MCF 10A (cell line): ENCODE measurements at regions of chr5 and their contacts with region 1.

Region 1: DNA sequence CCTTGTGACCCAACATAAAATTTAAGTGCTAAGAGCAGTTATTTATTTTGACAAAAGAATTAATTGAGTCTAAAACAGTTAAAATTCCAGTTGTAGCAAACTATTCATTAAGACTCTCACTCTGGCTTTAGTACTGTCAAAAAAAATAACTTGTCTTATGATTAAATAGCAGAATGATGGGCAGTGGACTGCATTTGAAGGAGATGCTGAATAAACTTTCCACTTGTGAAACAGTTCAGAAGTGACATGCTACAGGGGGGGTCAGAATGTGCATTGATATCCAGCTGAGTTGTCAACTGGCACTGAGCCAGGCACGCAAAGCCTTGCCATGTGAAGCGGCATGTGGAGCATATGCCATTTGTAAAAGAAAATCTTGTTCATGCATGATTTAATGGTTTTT is 76.0 kb downstream of the FCHO2 start:
- DNase-seq: peak; percentile 78
- H3K4me3 Mint-ChIP-seq: no peak overlapping the region
- H3K27ac Mint-ChIP-seq: peak overlapping the region; percentile 51
- H3K4me1 Mint-ChIP-seq: peaks cover 16% of the 10 kb centered on the region
- H3K27me3 Mint-ChIP-seq: no peaks in the 10 kb centered on the region
- CTCF ChIP-seq: no peak

Region 2: DNA sequence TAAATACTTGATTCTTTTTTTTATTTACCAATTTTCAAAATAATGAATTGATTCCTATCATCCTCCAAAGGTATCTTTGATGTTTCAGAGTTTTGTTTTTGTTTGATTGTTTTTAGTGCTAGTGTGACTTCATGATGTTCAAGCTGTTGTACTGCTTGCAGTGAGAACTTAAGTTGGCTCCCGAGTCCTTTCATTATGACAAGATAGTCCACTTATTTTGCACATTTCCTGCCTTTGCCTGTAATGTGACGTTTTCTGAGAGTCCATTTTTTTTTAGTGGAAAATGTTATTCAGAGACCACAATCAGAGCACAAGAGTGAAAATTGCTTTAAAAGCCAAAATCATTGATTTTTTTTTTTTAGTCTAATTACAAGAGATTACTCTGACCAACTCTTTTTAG is 136.1 kb before region 1 on chr5:
- CTCF ChIA-PET with region 1: no interaction called
- POLR2A ChIA-PET with region 1: no interaction called
- intact Hi-C with region 1: no loop called
- DNase-seq: no peak
- H3K4me3 Mint-ChIP-seq: no peak overlapping the region
- H3K27ac Mint-ChIP-seq: no peak overlapping the region
- H3K4me1 Mint-ChIP-seq: no peaks in the 10 kb centered on the region
- H3K27me3 Mint-ChIP-seq: no peaks in the 10 kb centered on the region
- CTCF ChIP-seq: no peak

Region 3: GRCh38 chr5:72920690-72921502 is 110.9 kb before region 1 on chr5:
- CTCF ChIA-PET with region 1: no interaction called
- POLR2A ChIA-PET with region 1: interaction called, 3 read pairs
- intact Hi-C with region 1: loop called (anchors 1 kb)
- DNase-seq: peak; percentile 45
- H3K4me3 Mint-ChIP-seq: no peak overlapping the region
- H3K27ac Mint-ChIP-seq: no peak overlapping the region
- H3K4me1 Mint-ChIP-seq: no peaks in the 10 kb centered on the region
- H3K27me3 Mint-ChIP-seq: no peaks in the 10 kb centered on the region
- CTCF ChIP-seq: peak; percentile 38